ENCODE measurements at regions of chr7 and their contacts with region 1.

Region 1: GRCh38 chr7:148919859-148920258 is 35.8 kb upstream of the EZH2 start:
- DNase-seq: no peak
- ATAC-seq: no peak
- H3K4me3 Mint-ChIP-seq: no peak overlapping the region
- H3K27ac Mint-ChIP-seq: no peak overlapping the region
- H3K4me1 Mint-ChIP-seq: peaks cover 51% of the 10 kb centered on the region
- H3K27me3 Mint-ChIP-seq: no peaks in the 10 kb centered on the region

Region 2: GRCh38 chr7:148838905-148839304 is 81.0 kb before region 1 on chr7:
- CTCF ChIA-PET with region 1: no interaction called
- POLR2A ChIA-PET with region 1: no interaction called
- intact Hi-C with region 1: no loop called
- DNase-seq: no peak
- ATAC-seq: no peak
- H3K4me3 Mint-ChIP-seq: no peak overlapping the region
- H3K27ac Mint-ChIP-seq: peak overlapping the region; percentile 42
- H3K4me1 Mint-ChIP-seq: peaks cover 27% of the 10 kb centered on the region
- H3K27me3 Mint-ChIP-seq: no peaks in the 10 kb centered on the region

Region 3: GRCh38 chr7:148856891-148857290 is 63.0 kb before region 1 on chr7:
- CTCF ChIA-PET with region 1: interaction called, 10 read pairs
- POLR2A ChIA-PET with region 1: interaction called, 7 read pairs
- intact Hi-C with region 1: no loop called
- DNase-seq: peak; percentile 45
- ATAC-seq: peak; percentile 87
- H3K4me3 Mint-ChIP-seq: peak overlapping the region; percentile 9
- H3K27ac Mint-ChIP-seq: peak overlapping the region; percentile 59
- H3K4me1 Mint-ChIP-seq: peaks cover 42% of the 10 kb centered on the region
- H3K27me3 Mint-ChIP-seq: no peaks in the 10 kb centered on the region

Region 4: GRCh38 chr7:148894591-148894990 is 25.3 kb before region 1 on chr7:
- CTCF ChIA-PET with region 1: no interaction called
- POLR2A ChIA-PET with region 1: no interaction called
- intact Hi-C with region 1: no loop called
- DNase-seq: no peak
- ATAC-seq: no peak
- H3K4me3 Mint-ChIP-seq: no peak overlapping the region
- H3K27ac Mint-ChIP-seq: no peak overlapping the region
- H3K4me1 Mint-ChIP-seq: peaks cover 10% of the 10 kb centered on the region
- H3K27me3 Mint-ChIP-seq: no peaks in the 10 kb centered on the region